GM23248 (cell line): ENCODE measurements at regions of chr4 and their contacts with region 1.

Region 1: DNA sequence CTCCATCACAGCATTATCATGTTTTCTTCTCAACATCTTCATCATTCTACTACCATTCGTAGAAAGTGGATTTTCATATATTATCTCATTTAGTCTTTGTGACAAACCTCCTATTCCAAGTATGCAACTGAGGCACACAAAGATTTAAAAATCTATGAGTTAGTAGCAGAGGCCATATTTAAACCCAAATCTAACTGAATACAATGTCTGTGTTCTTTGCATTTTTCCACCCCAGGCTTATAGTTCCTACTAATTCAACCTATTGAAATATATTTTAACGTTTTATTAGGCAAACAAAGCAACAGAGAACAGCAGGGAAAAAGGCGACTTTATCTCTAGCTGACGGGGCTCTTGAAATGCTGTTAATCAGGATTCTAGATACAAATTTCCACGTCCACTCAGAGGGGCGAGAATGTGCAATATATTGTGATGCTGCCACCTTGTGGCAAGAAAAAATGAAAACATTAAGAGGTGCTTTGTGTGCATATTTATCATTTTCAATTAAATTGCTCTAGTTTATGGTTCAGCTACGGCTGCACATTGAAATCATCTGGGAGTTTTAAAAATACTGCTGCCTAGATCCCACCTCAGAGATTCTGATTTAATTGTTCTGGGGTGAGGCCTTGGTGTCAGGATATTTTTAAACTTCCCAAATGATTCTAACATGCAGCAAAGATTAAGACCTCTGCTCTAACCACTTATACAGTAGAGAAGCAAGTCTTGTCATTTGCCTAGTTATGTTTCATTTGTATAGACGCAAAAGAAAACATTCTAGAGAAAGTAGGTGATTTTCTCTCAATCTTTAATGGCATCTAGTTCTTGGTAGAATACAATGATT is 315.9 kb downstream of the MAPK10 start:
- DNase-seq: peak; percentile 73
- H3K4me3 ChIP-seq: peak overlapping the region; percentile 43; the same call in 1 of the 2 replicates
- H3K27ac ChIP-seq: no peak overlapping the region
- H3K4me1 ChIP-seq: peaks cover 20% of the 10 kb centered on the region
- H3K27me3 ChIP-seq: no peaks in the 10 kb centered on the region

Region 2: DNA sequence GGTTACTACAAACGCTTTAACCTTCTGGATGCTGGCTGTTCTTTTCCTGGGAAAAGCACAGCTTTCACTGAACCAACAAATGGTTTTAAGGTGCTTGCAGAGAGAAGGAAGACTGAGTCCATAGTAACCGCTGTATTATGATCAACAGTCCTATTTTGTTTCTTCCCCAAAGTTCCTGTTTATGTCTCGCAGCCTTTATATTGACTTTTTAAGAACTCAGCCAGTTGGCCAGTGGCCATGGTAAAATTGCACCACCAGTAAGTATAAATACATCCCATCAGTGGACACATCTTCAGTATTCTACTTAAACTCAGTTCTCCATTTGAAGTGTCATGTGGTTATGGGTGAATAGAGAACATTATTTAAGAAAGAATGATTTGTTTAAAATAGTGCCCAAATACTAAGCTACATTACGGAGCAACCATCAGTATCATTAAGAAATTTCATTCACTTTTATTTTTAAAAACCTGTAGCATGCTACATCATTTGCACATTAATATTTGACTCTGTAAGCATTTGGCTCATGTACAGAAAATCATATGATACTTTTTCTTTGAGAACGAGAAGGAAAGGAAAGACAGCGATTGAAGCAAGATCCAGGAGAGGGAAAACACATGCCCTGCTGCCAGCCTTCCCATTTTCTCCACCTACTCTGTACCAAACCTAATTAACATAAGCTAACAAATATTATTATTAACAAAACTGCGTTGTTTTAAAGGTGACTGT is 282.0 kb before region 1 on chr4:
- in situ Hi-C with region 1: loop called (anchors 10 kb)
- DNase-seq: peak; percentile 59
- H3K4me3 ChIP-seq: peak overlapping the region; percentile 63
- H3K27ac ChIP-seq: peak overlapping the region; percentile 88
- H3K4me1 ChIP-seq: peaks cover 50% of the 10 kb centered on the region
- H3K27me3 ChIP-seq: no peaks in the 10 kb centered on the region

Region 3: GRCh38 chr4:86398187-86398586 is 354.2 kb after region 1 on chr4:
- in situ Hi-C with region 1: no loop called
- DNase-seq: no peak
- H3K4me3 ChIP-seq: no peak overlapping the region
- H3K27ac ChIP-seq: no peak overlapping the region
- H3K4me1 ChIP-seq: peaks cover 7% of the 10 kb centered on the region; the same call in 1 of the 2 replicates
- H3K27me3 ChIP-seq: no peaks in the 10 kb centered on the region